ENCODE measurements at regions of chr6 and their contacts with region 1.

Region 1: GRCh38 chr6:36027501-36028087 is at the start of gene MAPK14:
- DNase-seq: peak; percentile 100
- H3K4me3 Mint-ChIP-seq: peak within 1 kb of the TSS; percentile 93
- H3K27ac Mint-ChIP-seq: peak within 1 kb of the TSS; percentile 93
- H3K4me1 Mint-ChIP-seq: peaks cover 33% of the 10 kb centered on the region
- H3K27me3 Mint-ChIP-seq: peaks cover 19% of the 10 kb centered on the region
- total RNA-seq, gene MAPK14: 39.9 to 40.3 TPM

Region 2: DNA sequence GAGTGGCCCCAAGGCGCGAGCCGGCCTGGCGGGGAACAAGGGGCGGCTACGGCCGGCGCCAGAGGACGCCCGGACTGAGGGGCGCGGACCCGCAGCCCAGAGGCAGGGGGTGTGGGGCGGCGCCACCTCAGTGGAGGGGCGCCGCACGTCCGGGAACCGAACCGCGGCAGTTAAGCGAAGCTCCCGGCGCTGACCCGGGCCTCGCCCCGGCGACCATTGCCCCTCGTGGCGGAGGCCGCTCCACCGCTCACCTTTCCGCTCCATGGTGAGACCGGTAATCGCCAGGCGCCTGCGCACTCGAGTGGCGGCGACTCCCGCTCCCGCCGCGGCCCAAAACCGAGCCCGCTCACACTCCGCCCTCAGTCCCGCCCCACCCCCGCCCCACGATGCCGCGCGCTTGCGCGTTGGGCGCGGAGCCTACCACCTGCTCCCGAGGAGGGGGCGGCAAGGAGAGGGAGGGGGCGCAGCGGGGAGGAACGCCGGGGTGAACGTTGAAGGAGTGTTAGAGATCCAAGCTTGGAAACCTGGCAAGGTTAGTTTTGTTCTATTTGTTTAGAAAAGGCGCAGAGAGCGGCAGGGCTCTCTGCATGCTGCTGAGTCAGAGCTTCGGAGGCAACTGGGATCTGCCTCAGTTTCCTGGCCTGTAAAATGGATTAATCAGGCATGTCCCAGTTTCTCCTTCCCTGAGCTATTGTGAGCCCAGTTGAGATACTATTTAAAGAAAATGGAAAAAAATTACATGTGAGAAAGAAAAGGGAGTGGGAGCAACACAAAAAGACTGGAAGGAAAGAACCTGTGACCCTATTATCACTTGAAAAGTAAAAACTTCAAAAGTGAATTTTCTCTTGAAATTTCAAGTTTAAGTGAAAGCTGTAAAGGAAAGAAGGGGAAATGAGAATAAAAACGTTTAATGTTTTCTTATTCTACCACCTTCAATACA is 106.5 kb before region 1 on chr6 and contains the start of gene SRPK1:
- CTCF ChIA-PET with region 1: no interaction called
- intact Hi-C with region 1: loop called (anchors 2 kb)
- DNase-seq: peak; percentile 92
- H3K4me3 Mint-ChIP-seq: peak within 1 kb of the TSS; percentile 99
- H3K27ac Mint-ChIP-seq: peak within 1 kb of the TSS; percentile 98
- H3K4me1 Mint-ChIP-seq: peaks cover 46% of the 10 kb centered on the region
- H3K27me3 Mint-ChIP-seq: no peaks in the 10 kb centered on the region
- total RNA-seq, gene SRPK1: 126 to 127 TPM

Region 3: DNA sequence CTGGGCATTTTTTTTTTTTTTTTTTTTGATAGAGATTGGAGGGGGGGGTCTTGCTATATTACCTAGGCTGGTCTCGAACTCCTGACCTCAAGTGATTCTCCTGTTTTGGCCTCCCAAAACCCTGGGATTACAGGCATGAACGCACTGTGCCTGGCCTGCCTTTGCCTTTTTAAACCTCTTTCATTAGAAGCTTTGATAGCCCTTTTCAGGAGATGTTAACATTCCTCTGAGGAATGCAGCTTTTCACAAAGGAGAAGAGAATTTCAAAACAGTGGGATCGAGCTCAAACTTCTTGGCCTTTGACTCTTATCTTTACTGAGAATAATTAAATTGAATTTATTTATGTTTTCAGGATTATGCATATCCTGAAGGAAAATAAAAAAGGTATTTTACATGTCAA is 34.4 kb before region 1 on chr6:
- CTCF ChIA-PET with region 1: no interaction called
- intact Hi-C with region 1: no loop called
- DNase-seq: no peak
- H3K4me3 Mint-ChIP-seq: no peak overlapping the region
- H3K27ac Mint-ChIP-seq: no peak overlapping the region
- H3K4me1 Mint-ChIP-seq: no peaks in the 10 kb centered on the region
- H3K27me3 Mint-ChIP-seq: no peaks in the 10 kb centered on the region

Region 4: DNA sequence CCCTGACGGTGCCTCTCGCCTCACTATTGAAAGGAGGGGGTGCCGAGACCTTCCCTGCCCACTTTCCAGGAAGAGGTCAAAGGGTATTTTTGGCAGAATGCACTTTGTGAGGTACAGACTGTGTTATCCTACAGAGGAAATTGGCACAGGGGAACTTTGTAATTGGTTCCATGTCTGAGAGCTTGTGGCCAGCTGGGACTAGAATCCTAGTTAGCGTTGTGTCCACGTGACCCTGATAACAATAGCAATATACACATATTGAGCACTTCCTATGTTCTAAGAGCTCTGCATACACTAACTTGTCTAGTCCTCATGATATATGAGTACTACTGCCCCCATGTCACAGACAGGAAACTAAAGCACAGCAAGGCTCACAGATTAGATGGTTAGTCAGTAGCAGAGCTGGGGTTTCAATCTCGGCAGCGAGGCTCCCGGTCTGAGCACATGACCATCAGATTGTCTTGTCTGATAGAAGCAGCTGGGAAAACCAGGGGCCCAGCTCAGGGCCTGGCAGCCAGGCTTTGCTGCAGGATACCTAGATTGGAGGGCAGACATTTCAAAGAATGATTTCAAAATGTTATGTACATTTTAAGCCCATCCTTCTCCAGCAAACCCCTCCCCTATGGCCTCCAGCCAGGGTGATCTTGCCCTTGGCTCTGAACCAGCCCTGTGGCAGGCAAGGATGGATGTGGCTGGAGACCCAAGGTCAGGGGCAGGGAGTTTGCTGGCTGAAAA is 104.1 kb after region 1 on chr6:
- CTCF ChIA-PET with region 1: interaction called, 6 read pairs
- intact Hi-C with region 1: loop called (anchors 1 kb)
- DNase-seq: peak; percentile 85
- H3K4me3 Mint-ChIP-seq: peak overlapping the region; percentile 83
- H3K27ac Mint-ChIP-seq: peak overlapping the region; percentile 93
- H3K4me1 Mint-ChIP-seq: peaks cover 41% of the 10 kb centered on the region
- H3K27me3 Mint-ChIP-seq: no peaks in the 10 kb centered on the region

Region 5: GRCh38 chr6:36302227-36302976 is 274.8 kb after region 1 on chr6:
- CTCF ChIA-PET with region 1: interaction called, 3 read pairs
- intact Hi-C with region 1: loop called (anchors 1 kb)
- DNase-seq: peak; percentile 98
- H3K4me3 Mint-ChIP-seq: no peak overlapping the region
- H3K27ac Mint-ChIP-seq: no peak overlapping the region
- H3K4me1 Mint-ChIP-seq: peaks cover 2% of the 10 kb centered on the region
- H3K27me3 Mint-ChIP-seq: no peaks in the 10 kb centered on the region

Region 6: GRCh38 chr6:36442671-36443470 is 415.3 kb after region 1 on chr6 and contains the starts of genes KCTD20 and PXT1:
- CTCF ChIA-PET with region 1: no interaction called
- intact Hi-C with region 1: loop called (anchors 5 kb)
- DNase-seq: peak; percentile 93
- H3K4me3 Mint-ChIP-seq: peak within 1 kb of the TSS; percentile 87
- H3K27ac Mint-ChIP-seq: peak within 1 kb of the TSS; percentile 98
- H3K4me1 Mint-ChIP-seq: peaks cover 41% of the 10 kb centered on the region
- H3K27me3 Mint-ChIP-seq: no peaks in the 10 kb centered on the region
- total RNA-seq, gene KCTD20: 30.5 to 32.8 TPM
- total RNA-seq, gene PXT1: 0.15 to 0.29 TPM

Region 7: DNA sequence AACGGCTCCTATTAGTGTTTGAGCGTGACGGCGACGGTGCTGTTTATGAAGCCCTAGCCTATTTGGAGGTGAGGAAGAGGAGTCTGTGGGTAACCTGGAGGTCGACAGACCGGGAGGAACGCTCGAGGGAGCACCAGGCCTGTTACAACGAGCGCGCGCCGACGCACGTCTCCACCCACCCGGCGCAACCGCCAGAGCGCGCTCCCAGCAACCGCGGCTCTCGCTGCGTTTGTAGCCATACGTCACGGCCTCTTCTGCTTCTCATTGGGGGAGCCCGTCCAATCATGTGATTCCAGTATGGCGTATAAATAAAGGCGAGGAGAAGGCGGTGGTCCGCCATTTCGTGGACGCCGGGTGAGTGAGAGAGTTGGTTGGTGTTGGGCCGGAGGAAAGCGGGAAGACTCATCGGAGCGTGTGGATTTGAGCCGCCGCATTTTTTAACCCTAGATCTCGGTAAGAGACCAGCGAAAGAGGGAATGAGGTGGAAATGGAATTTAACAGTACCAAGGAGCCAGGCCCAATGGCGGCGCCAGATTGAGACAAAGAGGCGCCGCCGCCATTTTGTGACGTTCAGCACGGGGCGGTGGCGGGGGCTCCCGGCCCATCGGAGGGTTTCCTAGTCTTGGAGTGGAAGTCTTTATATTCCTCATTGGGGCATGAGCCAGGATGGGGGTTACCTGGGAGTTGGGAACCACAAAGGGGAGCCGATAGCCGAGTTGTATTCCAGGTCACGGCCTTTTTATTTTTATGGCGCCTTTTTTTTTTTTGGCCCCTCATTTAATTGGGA is 566.6 kb after region 1 on chr6 and contains the start of gene SRSF3:
- CTCF ChIA-PET with region 1: no interaction called
- intact Hi-C with region 1: loop called (anchors 5 kb)
- DNase-seq: peak; percentile 98
- H3K4me3 Mint-ChIP-seq: peak within 1 kb of the TSS; percentile 92
- H3K27ac Mint-ChIP-seq: peak within 1 kb of the TSS; percentile 98
- H3K4me1 Mint-ChIP-seq: peaks cover 31% of the 10 kb centered on the region
- H3K27me3 Mint-ChIP-seq: no peaks in the 10 kb centered on the region
- total RNA-seq, gene SRSF3: 250 to 269 TPM